ENCODE measurements at regions of chr21 and their contacts with region 1.

Region 1: GRCh38 chr21:32403201-32403777 is 9.2 kb upstream of the EVA1C start:
- DNase-seq: peak in 1 of 2 donors; percentile 35
- ATAC-seq: peak in 3 of 4 donors; percentile 70 to 78 (median 76)
- H3K4me3 ChIP-seq: no peak overlapping the region
- H3K27ac ChIP-seq: no peak overlapping the region
- H3K4me1 ChIP-seq: no peaks in the 10 kb centered on the region
- H3K27me3 ChIP-seq: peaks cover 0 to 6% (median 0%) of the 10 kb centered on the region in 3 donors
- CTCF ChIP-seq: peak; percentile 57

Region 2: GRCh38 chr21:32569261-32570230 is 166.3 kb after region 1 on chr21:
- intact Hi-C with region 1: loop called in 1 of 2 experiments (anchors 5 kb)
- DNase-seq: peak; percentile 69 to 78
- ATAC-seq: peak; percentile 72 to 97 (median 86)
- H3K4me3 ChIP-seq: peak overlapping the region; percentile 73
- H3K27ac ChIP-seq: peak overlapping the region; percentile 63
- H3K4me1 ChIP-seq: peaks cover 7% of the 10 kb centered on the region
- H3K27me3 ChIP-seq: no peaks in the 10 kb centered on the region
- CTCF ChIP-seq: peak; percentile 74

Region 3: DNA sequence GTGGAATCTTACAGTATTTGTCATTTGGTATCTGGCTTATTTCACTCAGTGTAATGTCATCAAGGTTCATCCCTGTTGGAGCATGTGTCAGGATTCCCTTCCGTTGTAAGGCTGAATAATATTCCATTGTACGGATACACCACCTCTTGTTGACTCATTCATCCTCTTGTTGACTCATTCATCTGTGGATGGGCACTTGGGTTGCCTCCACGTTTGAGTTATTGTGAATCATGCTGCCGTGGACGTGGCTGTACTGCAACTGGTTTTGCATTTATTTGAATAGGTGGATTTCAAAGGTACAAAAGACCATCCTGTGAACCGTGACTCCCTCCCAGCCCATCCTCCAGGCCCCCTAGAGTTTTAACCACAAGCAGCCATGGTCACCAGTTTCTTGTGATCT is 193.9 kb after region 1 on chr21:
- intact Hi-C with region 1: loop called (anchors 2 to 10 kb)
- DNase-seq: no peak
- ATAC-seq: peak in 1 of 4 donors; percentile 32
- H3K4me3 ChIP-seq: no peak overlapping the region
- H3K27ac ChIP-seq: no peak overlapping the region
- H3K4me1 ChIP-seq: no peaks in the 10 kb centered on the region
- H3K27me3 ChIP-seq: no peaks in the 10 kb centered on the region
- CTCF ChIP-seq: no peak

Region 4: GRCh38 chr21:32604464-32604863 is 201.2 kb after region 1 on chr21:
- intact Hi-C with region 1: loop called (anchors 2 to 10 kb)
- DNase-seq: no peak
- ATAC-seq: no peak
- H3K4me3 ChIP-seq: no peak overlapping the region
- H3K27ac ChIP-seq: no peak overlapping the region
- H3K4me1 ChIP-seq: no peaks in the 10 kb centered on the region
- H3K27me3 ChIP-seq: no peaks in the 10 kb centered on the region
- CTCF ChIP-seq: no peak